HEK293 (cell line): ENCODE measurements at regions of chr12 and their contacts with region 1.

Region 1: GRCh38 chr12:90978117-90978770 is 23.3 kb upstream of the CCER1 start:
- H3K4me3 ChIP-seq: no peak overlapping the region
- H3K27ac ChIP-seq: no peak overlapping the region
- H3K4me1 ChIP-seq: no peaks in the 10 kb centered on the region
- CTCF ChIP-seq: no peak

Region 2: DNA sequence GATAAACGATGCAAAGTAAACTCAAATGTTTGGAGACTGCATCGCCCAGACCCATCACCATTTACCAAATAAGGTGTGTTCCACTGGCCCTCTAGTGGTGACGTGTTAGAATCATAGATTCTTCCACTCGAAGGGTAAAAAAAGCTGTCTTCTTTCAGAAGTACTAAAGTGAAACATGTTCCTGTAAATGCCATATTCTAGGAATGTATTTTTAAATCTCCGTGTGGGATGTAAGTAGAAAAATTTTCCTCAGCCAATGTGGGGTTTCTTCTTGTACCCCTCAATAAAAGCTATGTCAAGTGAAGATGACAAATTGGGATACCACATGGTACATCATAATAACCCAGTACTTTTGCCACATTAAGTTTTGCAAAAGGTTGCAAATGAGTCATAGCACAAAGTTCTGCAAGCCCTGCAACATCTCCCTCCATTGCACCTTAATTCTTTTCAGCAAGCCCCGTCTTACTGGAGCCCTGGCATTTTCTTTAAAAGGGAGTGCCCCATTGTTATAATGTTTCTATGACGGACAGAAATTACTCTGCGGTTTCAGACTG is 124.0 kb before region 1 on chr12:
- CTCF ChIA-PET with region 1: no interaction called
- POLR2A ChIA-PET with region 1: no interaction called
- H3K4me3 ChIP-seq: no peak overlapping the region
- H3K27ac ChIP-seq: no peak overlapping the region
- H3K4me1 ChIP-seq: no peaks in the 10 kb centered on the region; the same call in 1 of the 2 replicates
- CTCF ChIP-seq: no peak

Region 3: DNA sequence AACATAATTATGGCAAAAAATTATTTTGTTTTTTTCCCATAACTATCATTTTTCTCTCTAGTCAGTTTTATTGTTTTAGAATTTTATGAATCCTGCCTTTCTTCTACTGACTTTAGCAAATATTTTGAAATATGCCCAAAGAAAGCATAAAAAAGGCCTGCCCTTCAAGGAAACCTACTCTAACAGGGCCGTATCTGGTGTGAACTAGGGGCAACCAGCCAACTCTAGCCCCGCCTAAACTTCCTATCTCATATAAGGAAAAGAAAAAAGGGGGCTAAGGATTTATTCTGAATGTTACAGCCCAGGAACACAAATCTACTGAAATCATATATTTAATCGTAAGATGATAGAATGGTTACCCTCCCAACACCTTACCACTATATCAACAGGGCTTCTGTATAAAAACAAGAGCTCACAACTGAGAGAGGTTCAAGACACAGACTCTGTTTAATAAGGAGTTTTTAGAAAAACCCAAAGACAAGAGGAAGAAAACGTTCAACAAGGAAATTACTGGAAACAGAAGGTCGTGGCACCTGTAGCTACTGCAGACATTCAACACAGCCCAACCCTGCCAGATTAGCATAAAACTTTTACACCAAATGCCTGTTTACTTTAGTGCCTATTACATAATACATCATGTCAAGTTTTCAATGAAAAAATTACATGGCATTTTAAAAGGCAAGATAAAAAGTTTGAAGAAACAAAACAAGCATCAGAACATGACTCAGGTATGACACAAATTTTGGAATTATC is 39.4 kb after region 1 on chr12:
- CTCF ChIA-PET with region 1: no interaction called
- POLR2A ChIA-PET with region 1: no interaction called
- H3K4me3 ChIP-seq: no peak overlapping the region
- H3K27ac ChIP-seq: no peak overlapping the region
- H3K4me1 ChIP-seq: no peaks in the 10 kb centered on the region
- CTCF ChIP-seq: no peak

Region 4: GRCh38 chr12:91326058-91327027 is 348.1 kb after region 1 on chr12:
- CTCF ChIA-PET with region 1: interaction called, 21 read pairs
- POLR2A ChIA-PET with region 1: no interaction called
- H3K4me3 ChIP-seq: no peak overlapping the region
- H3K27ac ChIP-seq: no peak overlapping the region
- H3K4me1 ChIP-seq: no peaks in the 10 kb centered on the region
- CTCF ChIP-seq: no peak

Region 5: DNA sequence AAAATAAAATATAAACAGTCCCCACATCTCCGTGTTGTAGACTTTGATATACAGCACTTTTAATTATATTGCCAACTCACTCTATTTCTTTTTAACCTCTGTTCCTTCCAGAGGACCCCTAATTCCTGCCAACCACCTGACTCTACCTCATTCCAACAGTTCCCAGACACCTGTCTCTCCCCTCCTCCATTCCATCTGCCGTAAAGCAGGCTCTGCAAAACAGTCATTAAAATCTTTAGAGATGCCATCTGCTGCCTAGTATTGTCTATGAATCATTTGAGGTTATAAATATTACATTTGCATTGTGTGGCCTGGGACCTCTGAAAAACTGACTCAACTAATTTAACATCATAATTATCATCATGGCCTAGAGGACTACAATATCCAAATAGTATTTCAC is 353.1 kb after region 1 on chr12:
- CTCF ChIA-PET with region 1: interaction called, 21 read pairs
- POLR2A ChIA-PET with region 1: no interaction called
- H3K4me3 ChIP-seq: no peak overlapping the region
- H3K27ac ChIP-seq: no peak overlapping the region
- H3K4me1 ChIP-seq: no peaks in the 10 kb centered on the region
- CTCF ChIP-seq: no peak

Region 6: GRCh38 chr12:91355150-91356006 is 377.1 kb after region 1 on chr12:
- CTCF ChIA-PET with region 1: interaction called, 27 read pairs
- POLR2A ChIA-PET with region 1: no interaction called
- H3K4me3 ChIP-seq: no peak overlapping the region
- H3K27ac ChIP-seq: no peak overlapping the region
- H3K4me1 ChIP-seq: no peaks in the 10 kb centered on the region
- CTCF ChIP-seq: peak; percentile 34; the same call in 1 of the 2 replicates

Region 7: GRCh38 chr12:91367234-91367849 is 389.1 kb after region 1 on chr12:
- CTCF ChIA-PET with region 1: interaction called, 10 read pairs
- POLR2A ChIA-PET with region 1: no interaction called
- H3K4me3 ChIP-seq: no peak overlapping the region
- H3K27ac ChIP-seq: no peak overlapping the region
- H3K4me1 ChIP-seq: no peaks in the 10 kb centered on the region
- CTCF ChIP-seq: no peak